Dendritic cell treated with granulocyte-macrophage colony-stimulating factor and Interleukin-4, amounts not matched to agents 40 ng/mL and 50 ng/mL, for 4 days (primary cell): ENCODE measurements at regions of chr2 and their contacts with region 1.

Region 1: GRCh38 chr2:65064728-65065552 is 8.7 kb downstream of the CEP68 start:
- H3K4me3 Mint-ChIP-seq: peak overlapping the region; percentile 71
- H3K27ac Mint-ChIP-seq: peak overlapping the region; percentile 98
- H3K4me1 Mint-ChIP-seq: peaks cover 73% of the 10 kb centered on the region
- H3K27me3 Mint-ChIP-seq: no peaks in the 10 kb centered on the region

Region 2: DNA sequence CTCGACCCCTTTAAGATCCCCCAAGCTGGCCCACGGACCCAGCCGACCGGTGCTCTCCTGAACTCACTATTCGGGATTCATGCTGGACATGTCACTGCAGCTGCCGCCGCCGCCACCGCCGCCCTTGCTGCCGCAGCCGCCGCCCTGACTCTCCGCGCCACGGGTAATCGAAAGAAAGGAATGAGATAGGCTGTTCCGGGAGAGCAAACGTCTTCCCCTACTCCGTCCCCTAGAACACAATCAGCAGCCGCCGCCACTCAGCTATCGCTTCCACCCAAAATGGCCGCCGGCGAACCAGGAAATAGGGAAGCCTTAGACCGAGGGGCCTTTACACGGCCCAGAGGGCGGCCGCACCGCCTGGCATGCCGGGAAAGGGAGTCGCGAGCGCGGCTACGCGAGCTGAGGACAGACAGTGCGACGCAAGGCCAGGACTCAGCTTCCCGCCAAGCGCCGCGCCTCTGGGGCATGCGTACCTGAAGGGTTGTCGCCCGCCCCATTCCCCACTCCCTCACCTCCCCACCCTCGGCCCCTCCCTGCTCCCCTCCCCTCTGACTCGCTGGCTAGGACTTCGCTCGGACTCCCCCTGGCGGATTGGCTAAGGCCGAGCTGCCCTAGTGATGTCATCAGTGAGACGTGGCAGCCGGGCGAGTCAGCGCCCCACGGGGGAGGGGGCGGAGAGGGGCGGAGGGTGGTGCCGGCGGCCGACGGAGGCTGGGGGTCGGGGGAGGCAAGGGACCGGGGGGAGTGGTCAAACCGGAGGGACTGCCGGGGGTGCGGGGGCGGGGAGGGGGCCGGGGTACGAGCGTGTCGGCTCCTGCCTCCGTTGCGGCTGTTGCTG is 65.1 kb after region 1 on chr2 and contains the start of gene RAB1A:
- intact Hi-C with region 1: loop called (anchors 2 kb)
- H3K4me3 Mint-ChIP-seq: peak within 1 kb of the TSS; percentile 95
- H3K27ac Mint-ChIP-seq: peak within 1 kb of the TSS; percentile 99
- H3K4me1 Mint-ChIP-seq: peaks cover 34% of the 10 kb centered on the region
- H3K27me3 Mint-ChIP-seq: no peaks in the 10 kb centered on the region

Region 3: DNA sequence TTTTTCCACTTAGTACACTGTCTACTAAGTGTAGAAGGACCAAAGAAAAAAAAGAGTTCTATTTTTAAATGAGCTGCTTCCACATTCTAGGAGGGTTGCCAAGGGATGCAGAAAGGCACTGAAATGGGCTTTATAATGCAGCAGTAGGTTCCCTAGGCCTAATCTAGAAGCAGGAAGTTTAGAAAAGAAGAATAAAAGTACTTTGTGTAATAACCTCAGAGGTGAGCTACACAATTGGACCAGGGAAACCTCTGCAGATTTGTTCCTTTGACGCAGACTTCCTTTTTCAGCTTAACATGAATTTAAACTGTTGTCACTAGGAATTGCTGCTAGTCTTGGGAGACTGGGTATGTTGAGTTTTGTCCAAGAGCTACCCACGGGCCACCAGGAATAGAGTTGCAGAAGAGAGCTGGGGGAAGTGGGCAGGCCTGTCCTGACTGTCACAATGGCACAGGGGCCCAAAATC is 99.5 kb after region 1 on chr2:
- intact Hi-C with region 1: loop called (anchors 5 kb)
- H3K4me3 Mint-ChIP-seq: no peak overlapping the region
- H3K27ac Mint-ChIP-seq: peak overlapping the region; percentile 87
- H3K4me1 Mint-ChIP-seq: peaks cover 40% of the 10 kb centered on the region
- H3K27me3 Mint-ChIP-seq: no peaks in the 10 kb centered on the region

Region 4: GRCh38 chr2:65186872-65187851 is 122.2 kb after region 1 on chr2:
- intact Hi-C with region 1: loop called (anchors 1 kb)
- H3K4me3 Mint-ChIP-seq: no peak overlapping the region
- H3K27ac Mint-ChIP-seq: peak overlapping the region; percentile 4
- H3K4me1 Mint-ChIP-seq: peaks cover 11% of the 10 kb centered on the region
- H3K27me3 Mint-ChIP-seq: peaks cover 7% of the 10 kb centered on the region

Region 5: DNA sequence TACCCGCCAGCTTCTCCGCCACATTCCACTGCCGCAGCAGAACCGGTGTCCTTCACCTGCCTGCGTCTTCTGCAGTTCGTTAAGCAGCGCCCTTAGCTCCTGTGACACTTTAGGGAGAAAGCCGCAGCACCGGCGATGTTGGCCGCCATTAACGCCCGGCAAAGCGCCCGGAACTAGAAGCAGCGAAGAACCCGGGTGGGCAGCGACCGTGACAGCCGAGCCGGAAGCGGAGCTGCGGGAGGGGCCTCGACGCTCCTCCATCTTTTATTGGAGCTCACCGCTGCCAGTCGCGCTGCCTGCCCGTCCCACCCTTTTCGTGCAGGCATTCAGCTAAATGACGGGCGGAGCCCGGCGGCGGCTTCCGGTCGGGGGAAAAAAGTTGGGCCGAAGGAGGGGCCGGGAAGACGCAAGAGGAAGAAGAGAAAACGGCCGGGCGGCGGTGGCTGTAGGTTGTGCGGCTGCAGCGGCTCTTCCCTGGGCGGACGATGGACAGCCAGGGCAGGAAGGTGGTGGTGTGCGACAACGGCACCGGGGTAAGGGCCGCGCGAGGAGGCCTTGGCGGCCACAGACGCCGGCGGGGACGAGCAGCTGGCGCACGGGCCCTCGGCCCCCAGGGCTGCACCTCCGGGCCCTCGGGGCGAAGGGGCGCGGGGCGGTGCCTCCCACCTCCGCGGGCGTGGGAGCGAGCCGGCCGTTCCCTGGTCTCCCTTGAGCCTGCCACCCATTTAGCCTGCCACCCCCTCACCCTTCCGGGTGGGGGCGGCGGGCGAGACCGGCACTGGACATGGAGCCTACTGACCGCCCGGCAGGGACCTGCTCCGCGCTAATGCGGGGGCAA is 162.7 kb after region 1 on chr2 and contains the start of gene ACTR2:
- intact Hi-C with region 1: loop called (anchors 5 kb)
- H3K4me3 Mint-ChIP-seq: peak within 1 kb of the TSS; percentile 99
- H3K27ac Mint-ChIP-seq: peak within 1 kb of the TSS; percentile 99
- H3K4me1 Mint-ChIP-seq: peaks cover 16% of the 10 kb centered on the region
- H3K27me3 Mint-ChIP-seq: no peaks in the 10 kb centered on the region

Region 6: DNA sequence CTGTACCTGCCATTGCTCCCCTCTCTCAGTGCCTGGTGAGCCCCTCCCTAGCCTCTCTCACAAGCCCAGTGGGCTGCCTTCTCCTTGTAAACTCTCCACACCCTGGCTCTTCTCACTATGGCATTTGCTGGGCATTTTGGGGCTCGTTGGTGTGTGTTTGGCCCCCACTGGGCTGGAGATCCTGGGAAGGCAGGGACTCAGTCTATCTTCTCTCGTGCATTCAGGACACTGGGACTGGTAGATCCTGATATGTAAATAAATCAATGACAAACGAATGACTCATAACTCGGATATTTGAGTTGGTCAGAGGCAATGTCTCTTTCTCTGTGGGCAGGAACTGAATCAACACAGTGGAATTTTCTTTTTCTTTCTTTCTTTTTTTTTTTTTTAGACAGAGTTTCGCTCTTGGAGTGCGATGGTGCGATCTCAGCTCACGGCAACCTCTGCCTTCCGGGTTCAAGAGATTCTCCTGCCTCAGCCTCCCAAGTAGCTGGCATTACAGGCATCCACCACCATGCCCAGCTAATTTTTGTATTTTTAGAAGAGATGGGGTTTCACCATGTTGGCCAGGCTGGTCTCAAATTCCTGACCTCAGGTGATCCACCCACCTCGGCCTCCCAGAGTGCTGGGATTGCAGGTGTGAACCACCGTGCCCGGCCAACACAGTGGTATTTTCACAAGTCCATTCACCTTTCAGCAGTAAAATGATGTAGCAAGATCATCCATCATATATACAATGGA is 512.1 kb after region 1 on chr2:
- intact Hi-C with region 1: loop called (anchors 10 kb)
- H3K4me3 Mint-ChIP-seq: no peak overlapping the region
- H3K27ac Mint-ChIP-seq: no peak overlapping the region
- H3K4me1 Mint-ChIP-seq: peaks cover 12% of the 10 kb centered on the region
- H3K27me3 Mint-ChIP-seq: peaks cover 10% of the 10 kb centered on the region